K562 (cell line): ENCODE measurements at regions of chr1 and their contacts with region 1.

Region 1: GRCh38 chr1:212558693-212559480 is 49.7 kb upstream of the ATF3 start:
- DNase-seq: peak; percentile 98 to 99 (median 98)
- ATAC-seq: peak; percentile 87
- H3K4me3 ChIP-seq: peak overlapping the region; percentile 54
- H3K27ac ChIP-seq: peak overlapping the region; percentile 97
- H3K4me1 ChIP-seq: peaks cover 14 to 16% of the 10 kb centered on the region in 2 experiments
- H3K27me3 ChIP-seq: no peaks in the 10 kb centered on the region
- CTCF ChIP-seq: no peak
- EP300 ChIP-seq: no peak; the same call in 1 of the 2 replicates
- POLR2A ChIP-seq: peak; percentile 81
- RAD21 ChIP-seq: 0 out of 4 replicates have a peak, but pooled peaks of 1 of the 2 experiments have one; percentile 23

Region 2: DNA sequence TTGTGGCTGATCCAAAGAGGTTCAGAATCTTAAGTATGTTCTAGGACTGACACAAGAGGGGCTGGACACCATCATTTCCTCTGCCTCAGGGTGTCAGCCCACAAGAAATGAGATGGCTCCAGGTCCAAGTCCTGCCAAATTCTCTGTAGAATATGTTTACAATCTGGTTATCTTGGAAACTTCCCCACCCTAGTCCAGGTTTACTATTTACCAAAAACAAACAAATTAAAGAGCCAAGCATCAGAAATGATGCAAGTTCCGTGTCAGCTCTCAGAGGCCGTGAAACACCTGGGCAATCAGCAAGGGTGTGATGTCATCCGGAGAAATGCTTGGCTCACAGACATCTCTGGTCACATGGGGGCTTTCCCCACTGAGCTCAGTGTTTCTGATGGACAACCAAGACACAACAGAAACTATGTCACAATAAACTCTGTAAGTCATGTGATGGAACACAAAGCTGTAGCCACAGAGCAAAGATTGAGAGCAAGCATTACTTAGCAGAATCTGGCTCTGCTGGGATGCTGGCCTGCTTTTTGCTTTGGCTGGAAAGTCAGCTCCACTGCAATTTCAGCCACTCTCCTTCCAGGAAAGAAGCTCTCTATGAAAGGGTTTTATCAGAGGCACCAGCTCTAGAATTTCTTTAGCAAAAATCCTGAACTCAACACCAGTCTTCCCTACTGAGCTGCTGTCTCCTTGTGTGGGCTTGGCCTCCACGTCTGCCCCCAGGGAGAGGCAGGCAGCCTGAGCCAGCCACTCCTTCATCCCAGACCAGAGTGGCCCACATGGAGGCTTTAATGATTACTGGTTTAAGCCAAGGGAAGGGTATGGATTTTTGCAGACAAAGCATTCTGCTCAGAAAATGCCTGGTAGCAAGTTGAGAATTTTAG is 70.2 kb before region 1 on chr1:
- CTCF ChIA-PET with region 1: no interaction called
- POLR2A ChIA-PET with region 1: interaction called, 4 read pairs
- in situ Hi-C with region 1: no loop called
- intact Hi-C with region 1: loop called (anchors 5 kb)
- DNase-seq: peak in 1 of 4 experiments; percentile 39
- ATAC-seq: peak; percentile 71
- H3K4me3 ChIP-seq: no peak overlapping the region
- H3K27ac ChIP-seq: no peak overlapping the region; the same call in 2 of the 3 replicates
- H3K4me1 ChIP-seq: peaks cover 8 to 17% of the 10 kb centered on the region in 2 experiments
- H3K27me3 ChIP-seq: peaks cover 9 to 27% of the 10 kb centered on the region in 2 experiments
- CTCF ChIP-seq: no peak
- EP300 ChIP-seq: peak; percentile 96
- POLR2A ChIP-seq: no peak
- RAD21 ChIP-seq: peak in 1 of 2 experiments; percentile 15; a peak in 1 of 4 replicates

Region 3: GRCh38 chr1:212699104-212699624 is 140.3 kb after region 1 on chr1:
- CTCF ChIA-PET with region 1: no interaction called
- POLR2A ChIA-PET with region 1: no interaction called
- in situ Hi-C with region 1: no loop called
- intact Hi-C with region 1: no loop called
- DNase-seq: peak; percentile 75 to 78 (median 76)
- ATAC-seq: peak; percentile 94
- H3K4me3 ChIP-seq: peak overlapping the region; percentile 46
- H3K27ac ChIP-seq: no peak overlapping the region
- H3K4me1 ChIP-seq: peaks cover 19 to 23% of the 10 kb centered on the region in 2 experiments
- H3K27me3 ChIP-seq: peaks cover 51 to 53% of the 10 kb centered on the region in 2 experiments
- CTCF ChIP-seq: peak; percentile 73 to 96 (median 82)
- EP300 ChIP-seq: no peak
- POLR2A ChIP-seq: no peak
- RAD21 ChIP-seq: peak; percentile 56 to 70